ENCODE measurements at regions of chr12 and their contacts with region 1.

Region 1: GRCh38 chr12:46372544-46373110 is at the start of gene SLC38A2:
- DNase-seq: peak; percentile 95 to 99 (median 97)
- ATAC-seq: peak; percentile 79
- H3K4me3 ChIP-seq: peak within 1 kb of the TSS; percentile 96
- H3K4me3 Mint-ChIP-seq: peak within 1 kb of the TSS; percentile 98
- H3K27ac ChIP-seq: peak within 1 kb of the TSS; percentile 85 to 94
- H3K27ac Mint-ChIP-seq: peak within 1 kb of the TSS; percentile 99
- H3K4me1 ChIP-seq: peaks cover 32% of the 10 kb centered on the region
- H3K4me1 Mint-ChIP-seq: peaks cover 64% of the 10 kb centered on the region
- H3K27me3 ChIP-seq: no peaks in the 10 kb centered on the region
- H3K27me3 Mint-ChIP-seq: peaks cover 7% of the 10 kb centered on the region
- CTCF ChIP-seq: no peak
- total RNA-seq, gene SLC38A2: 213 to 222 TPM

Region 2: DNA sequence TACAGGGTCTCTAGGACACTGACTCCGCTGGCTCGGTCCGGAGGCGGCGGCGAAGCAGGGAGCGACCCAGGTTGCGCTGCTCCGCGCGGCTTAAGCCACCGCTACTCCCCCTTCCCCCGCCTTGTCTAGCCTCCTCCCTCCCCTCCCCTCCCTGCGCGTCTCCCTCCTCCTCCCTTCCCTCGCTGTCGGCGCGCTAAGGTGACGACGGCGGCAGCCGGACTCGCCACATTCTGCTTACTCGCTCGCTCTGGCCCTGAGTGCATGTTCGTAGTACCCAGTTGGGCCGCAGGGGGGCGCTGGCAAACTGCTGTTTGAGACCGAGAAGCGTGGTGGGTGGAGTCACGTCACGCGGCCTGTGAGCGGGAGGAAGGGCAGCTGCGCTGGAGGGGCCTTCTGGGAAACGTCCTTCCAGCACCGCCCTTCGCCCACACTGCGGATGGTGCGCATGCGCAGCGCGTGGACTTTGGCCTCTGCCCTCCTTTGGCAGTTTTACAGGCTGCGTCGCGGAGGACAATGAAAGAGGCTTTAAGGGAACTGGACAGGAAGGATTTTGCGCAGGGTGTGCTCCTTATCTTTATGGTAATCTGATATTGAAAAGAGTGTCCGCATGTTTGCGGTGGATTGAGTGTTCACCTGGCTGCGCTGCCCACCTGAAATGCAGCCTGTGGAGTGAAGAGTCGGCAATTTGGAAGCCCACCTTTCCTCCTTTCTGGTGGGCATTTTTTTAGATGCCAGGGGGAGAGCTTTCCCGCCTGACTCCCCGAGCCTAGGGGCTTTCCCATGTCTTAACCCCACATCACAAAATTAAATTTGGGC is 382.0 kb before region 1 on chr12 and contains the start of gene SCAF11:
- CTCF ChIA-PET with region 1: interaction called, 3 read pairs
- POLR2A ChIA-PET with region 1: interaction called, 13 read pairs
- intact Hi-C with region 1: loop called (anchors 2 to 10 kb)
- DNase-seq: peak; percentile 100
- ATAC-seq: peak; percentile 76
- H3K4me3 ChIP-seq: peak within 1 kb of the TSS; percentile 95
- H3K4me3 Mint-ChIP-seq: peak within 1 kb of the TSS; percentile 95
- H3K27ac ChIP-seq: peak within 1 kb of the TSS; percentile 98
- H3K27ac Mint-ChIP-seq: peak within 1 kb of the TSS; percentile 98
- H3K4me1 ChIP-seq: peaks cover 21% of the 10 kb centered on the region
- H3K4me1 Mint-ChIP-seq: peaks cover 56% of the 10 kb centered on the region
- H3K27me3 ChIP-seq: no peaks in the 10 kb centered on the region
- H3K27me3 Mint-ChIP-seq: peaks cover 4% of the 10 kb centered on the region
- CTCF ChIP-seq: peak; percentile 79
- total RNA-seq, gene SCAF11: 205 to 213 TPM

Region 3: GRCh38 chr12:46217541-46218321 is 154.9 kb before region 1 on chr12:
- CTCF ChIA-PET with region 1: interaction called, 4 read pairs
- POLR2A ChIA-PET with region 1: interaction called, 6 read pairs
- intact Hi-C with region 1: loop called (anchors 1 to 5 kb)
- DNase-seq: peak in 10 of 14 experiments; percentile 22 to 90 (median 56)
- ATAC-seq: peak; percentile 33
- H3K4me3 ChIP-seq: peak overlapping the region; percentile 40
- H3K4me3 Mint-ChIP-seq: peak overlapping the region; percentile 85
- H3K27ac ChIP-seq: peak overlapping the region; percentile 91 to 94
- H3K27ac Mint-ChIP-seq: peak overlapping the region; percentile 96
- H3K4me1 ChIP-seq: peaks cover 78% of the 10 kb centered on the region
- H3K4me1 Mint-ChIP-seq: peaks cover 98% of the 10 kb centered on the region
- H3K27me3 ChIP-seq: no peaks in the 10 kb centered on the region
- H3K27me3 Mint-ChIP-seq: no peaks in the 10 kb centered on the region
- CTCF ChIP-seq: no peak

Region 4: DNA sequence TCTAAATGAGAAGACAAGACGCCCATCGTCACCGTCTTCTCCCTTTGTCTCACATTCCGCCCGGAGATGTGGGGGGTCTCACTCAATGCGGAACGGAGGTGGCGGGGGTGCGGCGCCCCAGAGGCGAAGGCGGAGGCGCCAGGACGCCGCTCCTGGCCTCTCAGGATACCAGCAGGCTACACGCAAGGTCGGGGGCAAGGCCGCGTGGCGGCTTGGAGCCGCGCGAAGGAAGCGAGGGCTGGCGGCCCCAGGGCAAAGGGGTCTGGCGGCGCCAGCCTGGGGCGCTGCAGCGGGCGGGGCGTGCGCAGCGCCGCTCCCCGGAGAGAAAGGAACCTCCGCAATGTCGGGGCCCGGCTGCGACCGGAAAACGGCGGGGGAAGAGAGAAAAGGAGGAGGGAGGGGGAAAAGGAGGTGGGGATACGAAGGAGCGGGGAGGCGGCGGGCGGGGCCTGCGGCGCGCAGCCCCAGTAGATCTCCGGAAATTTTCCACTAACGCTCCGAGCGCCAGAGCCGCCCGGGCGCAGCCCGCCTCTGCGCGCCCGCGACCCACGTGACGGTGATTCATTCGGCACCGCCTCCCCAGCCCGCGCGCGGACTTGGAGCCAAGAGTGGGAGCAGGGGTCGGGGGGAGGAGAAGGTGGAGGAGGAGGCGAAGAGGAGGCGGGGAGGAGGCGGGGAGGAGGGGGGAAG is 10.5 kb after region 1 on chr12:
- CTCF ChIA-PET with region 1: interaction called, 5 read pairs
- POLR2A ChIA-PET with region 1: interaction called, 60 read pairs
- intact Hi-C with region 1: loop called (anchors 1 kb)
- DNase-seq: peak; percentile 74 to 97 (median 88)
- ATAC-seq: peak; percentile 73
- H3K4me3 ChIP-seq: peak overlapping the region; percentile 83
- H3K4me3 Mint-ChIP-seq: peak overlapping the region; percentile 93
- H3K27ac ChIP-seq: peak overlapping the region; percentile 83 to 90
- H3K27ac Mint-ChIP-seq: peak overlapping the region; percentile 99
- H3K4me1 ChIP-seq: peaks cover 16% of the 10 kb centered on the region
- H3K4me1 Mint-ChIP-seq: peaks cover 44% of the 10 kb centered on the region
- H3K27me3 ChIP-seq: no peaks in the 10 kb centered on the region
- H3K27me3 Mint-ChIP-seq: no peaks in the 10 kb centered on the region
- CTCF ChIP-seq: peak; percentile 4

Region 5: GRCh38 chr12:46406352-46407027 is 33.9 kb after region 1 on chr12:
- CTCF ChIA-PET with region 1: no interaction called
- POLR2A ChIA-PET with region 1: no interaction called
- intact Hi-C with region 1: no loop called
- DNase-seq: no peak
- ATAC-seq: no peak
- H3K4me3 ChIP-seq: no peak overlapping the region
- H3K4me3 Mint-ChIP-seq: no peak overlapping the region
- H3K27ac ChIP-seq: no peak overlapping the region
- H3K27ac Mint-ChIP-seq: no peak overlapping the region
- H3K4me1 ChIP-seq: no peaks in the 10 kb centered on the region
- H3K4me1 Mint-ChIP-seq: peaks cover 31% of the 10 kb centered on the region
- H3K27me3 ChIP-seq: no peaks in the 10 kb centered on the region
- H3K27me3 Mint-ChIP-seq: no peaks in the 10 kb centered on the region
- CTCF ChIP-seq: no peak

Region 6: GRCh38 chr12:46523863-46524770 is 151.5 kb after region 1 on chr12:
- CTCF ChIA-PET with region 1: no interaction called
- POLR2A ChIA-PET with region 1: interaction called, 15 read pairs
- intact Hi-C with region 1: loop called in 1 of 2 experiments (anchors 5 kb)
- DNase-seq: peak in 12 of 14 experiments; percentile 14 to 84 (median 34)
- ATAC-seq: peak; percentile 96
- H3K4me3 ChIP-seq: peak overlapping the region; percentile 32
- H3K4me3 Mint-ChIP-seq: peak overlapping the region; percentile 77
- H3K27ac ChIP-seq: peak overlapping the region; percentile 37 to 76
- H3K27ac Mint-ChIP-seq: peak overlapping the region; percentile 83
- H3K4me1 ChIP-seq: peaks cover 21% of the 10 kb centered on the region
- H3K4me1 Mint-ChIP-seq: peaks cover 28% of the 10 kb centered on the region
- H3K27me3 ChIP-seq: no peaks in the 10 kb centered on the region
- H3K27me3 Mint-ChIP-seq: no peaks in the 10 kb centered on the region
- CTCF ChIP-seq: no peak

Region 7: GRCh38 chr12:46661110-46661845 is 288.7 kb after region 1 on chr12:
- CTCF ChIA-PET with region 1: interaction called, 3 read pairs
- POLR2A ChIA-PET with region 1: interaction called, 18 read pairs
- intact Hi-C with region 1: loop called (anchors 5 kb)
- DNase-seq: peak in 4 of 14 experiments; percentile 19 to 72 (median 70)
- ATAC-seq: peak; percentile 88
- H3K4me3 ChIP-seq: no peak overlapping the region
- H3K4me3 Mint-ChIP-seq: no peak overlapping the region
- H3K27ac ChIP-seq: no peak overlapping the region
- H3K27ac Mint-ChIP-seq: no peak overlapping the region
- H3K4me1 ChIP-seq: no peaks in the 10 kb centered on the region
- H3K4me1 Mint-ChIP-seq: peaks cover 32% of the 10 kb centered on the region
- H3K27me3 ChIP-seq: no peaks in the 10 kb centered on the region
- H3K27me3 Mint-ChIP-seq: no peaks in the 10 kb centered on the region
- CTCF ChIP-seq: peak; percentile 65

Measured in CD4-positive, alpha-beta T cell (primary cell).